A673 (cell line): ENCODE measurements at regions of chr1 and their contacts with region 1.

Region 1: GRCh38 chr1:151968058-151968457 is 25.6 kb downstream of the S100A10 start:
- DNase-seq: peak; percentile 67
- H3K4me3 ChIP-seq: no peak overlapping the region
- H3K27ac ChIP-seq: no peak overlapping the region
- H3K4me1 ChIP-seq: peaks cover 36% of the 10 kb centered on the region
- H3K27me3 ChIP-seq: peaks cover 6% of the 10 kb centered on the region
- CTCF ChIP-seq: peak; percentile 77

Region 2: GRCh38 chr1:151989211-151989862 is 21.3 kb after region 1 on chr1:
- CTCF ChIA-PET with region 1: interaction called, 3 read pairs
- POLR2A ChIA-PET with region 1: interaction called, 5 read pairs
- intact Hi-C with region 1: loop called (anchors 2 kb)
- DNase-seq: no peak
- H3K4me3 ChIP-seq: no peak overlapping the region
- H3K27ac ChIP-seq: no peak overlapping the region
- H3K4me1 ChIP-seq: peaks cover 57% of the 10 kb centered on the region
- H3K27me3 ChIP-seq: peaks cover 7% of the 10 kb centered on the region
- CTCF ChIP-seq: no peak

Region 3: GRCh38 chr1:151995774-151996173 is 27.7 kb after region 1 on chr1:
- CTCF ChIA-PET with region 1: interaction called, 25 read pairs
- POLR2A ChIA-PET with region 1: no interaction called
- intact Hi-C with region 1: loop called (anchors 1 kb)
- DNase-seq: no peak
- H3K4me3 ChIP-seq: no peak overlapping the region
- H3K27ac ChIP-seq: no peak overlapping the region
- H3K4me1 ChIP-seq: peaks cover 25% of the 10 kb centered on the region
- H3K27me3 ChIP-seq: peaks cover 7% of the 10 kb centered on the region
- CTCF ChIP-seq: no peak

Region 4: GRCh38 chr1:152001391-152002249 is 33.6 kb after region 1 on chr1:
- CTCF ChIA-PET with region 1: interaction called, 25 read pairs
- POLR2A ChIA-PET with region 1: no interaction called
- intact Hi-C with region 1: loop called (anchors 1 kb)
- DNase-seq: peak; percentile 90
- H3K4me3 ChIP-seq: no peak overlapping the region
- H3K27ac ChIP-seq: no peak overlapping the region
- H3K4me1 ChIP-seq: no peaks in the 10 kb centered on the region
- H3K27me3 ChIP-seq: peaks cover 33% of the 10 kb centered on the region
- CTCF ChIP-seq: peak; percentile 92

Region 5: GRCh38 chr1:152013664-152014237 is 45.7 kb after region 1 on chr1:
- CTCF ChIA-PET with region 1: interaction called, 3 read pairs
- POLR2A ChIA-PET with region 1: no interaction called
- intact Hi-C with region 1: loop called (anchors 1 kb)
- DNase-seq: peak; percentile 61
- H3K4me3 ChIP-seq: no peak overlapping the region
- H3K27ac ChIP-seq: no peak overlapping the region
- H3K4me1 ChIP-seq: no peaks in the 10 kb centered on the region
- H3K27me3 ChIP-seq: peaks cover 17% of the 10 kb centered on the region
- CTCF ChIP-seq: peak; percentile 81

Region 6: GRCh38 chr1:152160576-152160975 is 192.5 kb after region 1 on chr1:
- CTCF ChIA-PET with region 1: no interaction called
- POLR2A ChIA-PET with region 1: no interaction called
- intact Hi-C with region 1: no loop called
- DNase-seq: no peak
- H3K4me3 ChIP-seq: no peak overlapping the region
- H3K27ac ChIP-seq: no peak overlapping the region
- H3K4me1 ChIP-seq: no peaks in the 10 kb centered on the region
- H3K27me3 ChIP-seq: peaks cover 17% of the 10 kb centered on the region
- CTCF ChIP-seq: no peak

Region 7: DNA sequence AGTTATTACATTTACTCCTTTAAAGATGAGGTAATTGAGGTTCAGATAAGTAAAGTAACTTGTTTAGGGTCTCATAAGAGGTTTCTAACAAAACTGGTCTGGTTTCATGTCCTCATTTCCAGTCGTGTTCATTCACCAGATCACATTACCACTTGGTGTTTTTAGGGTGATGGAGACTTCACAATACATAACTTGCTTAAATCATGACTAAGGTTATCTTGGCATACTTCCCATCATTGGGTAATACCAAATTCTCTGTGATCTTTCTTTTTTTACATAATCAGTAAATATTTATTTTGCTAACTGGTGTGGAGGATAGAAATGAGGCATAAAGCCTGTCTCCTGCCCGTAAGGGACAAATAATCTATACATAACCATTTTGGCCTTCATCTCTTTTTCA is 222.5 kb after region 1 on chr1:
- CTCF ChIA-PET with region 1: no interaction called
- POLR2A ChIA-PET with region 1: no interaction called
- intact Hi-C with region 1: no loop called
- DNase-seq: no peak
- H3K4me3 ChIP-seq: no peak overlapping the region
- H3K27ac ChIP-seq: no peak overlapping the region
- H3K4me1 ChIP-seq: no peaks in the 10 kb centered on the region
- H3K27me3 ChIP-seq: no peaks in the 10 kb centered on the region
- CTCF ChIP-seq: no peak

Region 8: GRCh38 chr1:153210206-153210605 is 1242.1 kb after region 1 on chr1:
- CTCF ChIA-PET with region 1: no interaction called
- POLR2A ChIA-PET with region 1: no interaction called
- intact Hi-C with region 1: no loop called
- DNase-seq: no peak
- H3K4me3 ChIP-seq: no peak overlapping the region
- H3K27ac ChIP-seq: no peak overlapping the region
- H3K4me1 ChIP-seq: no peaks in the 10 kb centered on the region
- H3K27me3 ChIP-seq: peaks cover 36% of the 10 kb centered on the region
- CTCF ChIP-seq: no peak